Mammary epithelial cell (primary cell): ENCODE measurements at regions of chr22 and their contacts with region 1.

Region 1: DNA sequence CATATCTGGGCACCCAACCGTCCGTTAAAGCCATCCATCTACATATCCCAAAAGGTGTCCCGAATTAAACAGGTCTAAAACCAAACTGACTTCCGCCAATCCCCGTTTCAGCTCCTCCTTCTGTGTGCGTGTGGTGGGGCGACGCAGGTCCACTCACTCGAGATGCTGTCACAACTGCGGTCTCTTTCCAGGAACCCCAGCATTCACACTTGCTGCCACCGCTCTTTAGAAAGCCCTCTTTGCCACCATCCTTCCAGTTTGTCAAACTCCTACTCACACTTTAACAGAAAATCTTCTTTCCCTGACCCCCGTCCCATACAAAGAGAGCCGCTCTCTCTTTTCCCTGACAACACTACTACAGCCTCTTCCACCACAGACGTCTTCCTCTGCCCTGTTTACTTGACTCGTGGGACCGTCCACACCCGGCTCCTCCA is 467 bp downstream of the ESS2 start:
- DNase-seq: peak; percentile 24
- H3K4me3 ChIP-seq: peak overlapping the region; percentile 77 to 100 (median 87)
- H3K27ac ChIP-seq: peak overlapping the region; percentile 75
- H3K4me1 ChIP-seq: peaks cover 7% of the 10 kb centered on the region
- H3K27me3 ChIP-seq: peaks cover 10% of the 10 kb centered on the region
- CTCF ChIP-seq: no peak

Region 2: DNA sequence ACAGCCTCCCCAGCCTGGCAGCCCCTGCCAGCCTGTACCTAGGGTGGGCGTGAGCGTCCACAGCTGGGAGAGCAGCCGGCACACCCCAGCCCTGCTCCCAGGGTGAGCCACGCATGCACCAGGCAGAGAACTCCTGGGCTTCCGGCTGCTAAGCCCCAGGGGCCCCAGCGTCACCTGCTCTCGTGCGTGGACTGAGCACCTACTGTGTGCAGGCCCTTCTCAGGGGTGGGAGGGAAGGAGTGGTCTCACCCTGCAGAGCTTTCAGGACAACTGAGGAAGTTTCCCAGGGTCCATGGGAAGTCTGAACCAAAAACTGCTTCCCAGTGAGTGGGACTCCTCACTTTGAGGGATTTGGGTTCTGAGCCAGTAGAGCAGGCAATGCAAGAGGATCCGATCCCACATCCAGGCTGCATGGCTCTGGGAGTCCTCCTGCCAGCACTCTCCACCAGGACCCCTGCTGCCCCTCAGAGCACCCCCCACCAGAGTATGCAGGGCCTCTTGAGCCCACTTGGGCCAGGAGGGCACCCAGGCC is 160.8 kb before region 1 on chr22:
- CTCF ChIA-PET with region 1: no interaction called
- dilution Hi-C with region 1: no loop called
- in situ Hi-C with region 1: no loop called
- intact Hi-C with region 1: no loop called
- DNase-seq: no peak
- H3K4me3 ChIP-seq: no peak overlapping the region
- H3K27ac ChIP-seq: no peak overlapping the region
- H3K4me1 ChIP-seq: peaks cover 4% of the 10 kb centered on the region
- H3K27me3 ChIP-seq: no peaks in the 10 kb centered on the region
- CTCF ChIP-seq: no peak

Region 3: GRCh38 chr22:19060356-19061009 is 83.5 kb before region 1 on chr22:
- CTCF ChIA-PET with region 1: no interaction called
- dilution Hi-C with region 1: loop called (anchors 5 kb)
- in situ Hi-C with region 1: no loop called
- intact Hi-C with region 1: no loop called
- DNase-seq: peak; percentile 50
- H3K4me3 ChIP-seq: no peak overlapping the region
- H3K27ac ChIP-seq: no peak overlapping the region
- H3K4me1 ChIP-seq: peaks cover 10% of the 10 kb centered on the region
- H3K27me3 ChIP-seq: no peaks in the 10 kb centered on the region
- CTCF ChIP-seq: no peak

Region 4: GRCh38 chr22:19168211-19168890 is 24.4 kb after region 1 on chr22:
- CTCF ChIA-PET with region 1: no interaction called
- dilution Hi-C with region 1: no loop called
- in situ Hi-C with region 1: no loop called
- intact Hi-C with region 1: no loop called
- DNase-seq: no peak
- H3K4me3 ChIP-seq: no peak overlapping the region
- H3K27ac ChIP-seq: no peak overlapping the region
- H3K4me1 ChIP-seq: peaks cover 25% of the 10 kb centered on the region
- H3K27me3 ChIP-seq: peaks cover 8% of the 10 kb centered on the region
- CTCF ChIP-seq: no peak

Region 5: GRCh38 chr22:19232623-19233022 is 88.6 kb after region 1 on chr22:
- CTCF ChIA-PET with region 1: no interaction called
- dilution Hi-C with region 1: no loop called
- in situ Hi-C with region 1: no loop called
- intact Hi-C with region 1: no loop called
- DNase-seq: no peak
- H3K4me3 ChIP-seq: no peak overlapping the region
- H3K27ac ChIP-seq: no peak overlapping the region
- H3K4me1 ChIP-seq: no peaks in the 10 kb centered on the region
- H3K27me3 ChIP-seq: no peaks in the 10 kb centered on the region
- CTCF ChIP-seq: no peak